ENCODE measurements at regions of chr18 and their contacts with region 1.

Region 1: DNA sequence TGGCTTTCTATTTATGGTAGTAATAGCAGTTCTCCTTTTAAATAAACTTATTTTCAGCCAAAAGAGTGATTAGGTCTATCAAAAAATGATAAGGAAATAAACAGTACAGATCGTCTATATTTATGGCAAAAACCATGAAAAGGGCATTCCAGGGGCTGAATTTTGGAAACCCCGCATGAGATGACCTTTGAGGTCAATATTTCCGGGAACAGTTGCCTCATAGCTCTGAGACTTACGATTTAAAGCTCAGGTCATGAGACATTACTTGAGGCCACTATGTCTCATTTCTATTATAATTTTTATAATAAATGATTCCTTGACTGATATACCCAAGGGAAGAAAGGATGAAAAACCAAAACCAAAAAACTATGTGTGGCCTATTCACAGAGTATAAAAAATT is 101.1 kb downstream of the LDLRAD4 start:
- DNase-seq: no peak
- ATAC-seq: peak; percentile 40
- H3K4me3 ChIP-seq: no peak overlapping the region
- H3K27ac ChIP-seq: peak overlapping the region in 1 of 2 donors; percentile 14
- H3K4me1 ChIP-seq: peaks cover 2 to 3% of the 10 kb centered on the region in 2 donors
- H3K27me3 ChIP-seq: no peaks in the 10 kb centered on the region

Region 2: DNA sequence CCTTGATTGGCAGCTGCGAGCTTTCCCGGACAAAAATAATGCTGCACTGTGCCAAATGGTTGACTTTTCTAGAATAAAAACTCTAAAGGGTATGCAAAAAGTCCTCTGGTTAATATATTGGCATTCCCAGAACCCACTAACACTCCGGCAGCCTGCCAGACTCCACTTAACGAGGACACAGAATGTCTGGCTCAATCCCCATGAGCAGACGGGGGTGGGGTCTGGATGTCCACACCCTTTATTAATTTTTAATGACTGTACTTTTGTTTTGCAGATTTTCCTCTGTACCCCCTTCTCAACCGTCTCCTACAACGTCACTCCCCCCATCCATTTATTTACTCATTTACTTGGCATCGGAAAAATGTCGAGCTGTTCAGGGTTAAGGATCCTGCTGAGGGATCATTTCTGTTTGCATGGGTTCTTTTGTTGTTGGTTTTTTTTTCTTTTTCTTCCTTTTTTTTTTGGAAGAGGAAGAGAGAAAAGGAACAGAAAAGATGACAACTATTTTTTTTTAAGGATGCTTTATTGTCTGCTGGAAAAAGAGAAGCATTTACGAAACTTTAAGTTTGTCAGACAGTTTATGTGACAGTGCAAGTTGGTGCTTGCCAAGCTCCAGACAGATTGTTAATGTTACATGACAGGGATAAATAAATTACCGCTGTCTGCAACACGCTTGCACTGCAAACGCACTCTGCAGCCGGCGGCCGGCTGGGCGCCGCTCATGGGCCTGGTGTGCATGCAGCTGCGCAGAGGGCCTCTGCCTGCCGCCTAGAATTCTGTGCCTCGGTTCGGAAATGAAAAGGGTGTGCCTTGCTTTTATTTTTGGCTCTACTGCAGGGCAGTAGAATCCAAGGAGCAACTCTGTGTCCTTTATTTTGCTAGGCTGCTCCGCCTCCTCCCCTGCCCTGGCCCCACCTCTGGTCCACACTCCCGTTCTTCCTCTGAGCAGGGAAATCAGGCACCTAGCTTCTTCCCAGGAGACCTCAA is 97.5 kb before region 1 on chr18:
- intact Hi-C with region 1: loop called in 1 of 2 experiments (anchors 5 kb)
- DNase-seq: peak; percentile 88 to 89
- ATAC-seq: peak; percentile 79
- H3K4me3 ChIP-seq: no peak overlapping the region
- H3K27ac ChIP-seq: peak overlapping the region; percentile 30 to 32
- H3K4me1 ChIP-seq: no peaks in the 10 kb centered on the region
- H3K27me3 ChIP-seq: no peaks in the 10 kb centered on the region

Region 3: GRCh38 chr18:13279181-13280069 is 40.2 kb before region 1 on chr18:
- intact Hi-C with region 1: loop called (anchors 5 kb)
- DNase-seq: peak in 1 of 2 donors; percentile 42
- ATAC-seq: no peak
- H3K4me3 ChIP-seq: no peak overlapping the region
- H3K27ac ChIP-seq: no peak overlapping the region
- H3K4me1 ChIP-seq: peaks cover under 1 to 3% of the 10 kb centered on the region in 2 donors
- H3K27me3 ChIP-seq: no peaks in the 10 kb centered on the region

Region 4: DNA sequence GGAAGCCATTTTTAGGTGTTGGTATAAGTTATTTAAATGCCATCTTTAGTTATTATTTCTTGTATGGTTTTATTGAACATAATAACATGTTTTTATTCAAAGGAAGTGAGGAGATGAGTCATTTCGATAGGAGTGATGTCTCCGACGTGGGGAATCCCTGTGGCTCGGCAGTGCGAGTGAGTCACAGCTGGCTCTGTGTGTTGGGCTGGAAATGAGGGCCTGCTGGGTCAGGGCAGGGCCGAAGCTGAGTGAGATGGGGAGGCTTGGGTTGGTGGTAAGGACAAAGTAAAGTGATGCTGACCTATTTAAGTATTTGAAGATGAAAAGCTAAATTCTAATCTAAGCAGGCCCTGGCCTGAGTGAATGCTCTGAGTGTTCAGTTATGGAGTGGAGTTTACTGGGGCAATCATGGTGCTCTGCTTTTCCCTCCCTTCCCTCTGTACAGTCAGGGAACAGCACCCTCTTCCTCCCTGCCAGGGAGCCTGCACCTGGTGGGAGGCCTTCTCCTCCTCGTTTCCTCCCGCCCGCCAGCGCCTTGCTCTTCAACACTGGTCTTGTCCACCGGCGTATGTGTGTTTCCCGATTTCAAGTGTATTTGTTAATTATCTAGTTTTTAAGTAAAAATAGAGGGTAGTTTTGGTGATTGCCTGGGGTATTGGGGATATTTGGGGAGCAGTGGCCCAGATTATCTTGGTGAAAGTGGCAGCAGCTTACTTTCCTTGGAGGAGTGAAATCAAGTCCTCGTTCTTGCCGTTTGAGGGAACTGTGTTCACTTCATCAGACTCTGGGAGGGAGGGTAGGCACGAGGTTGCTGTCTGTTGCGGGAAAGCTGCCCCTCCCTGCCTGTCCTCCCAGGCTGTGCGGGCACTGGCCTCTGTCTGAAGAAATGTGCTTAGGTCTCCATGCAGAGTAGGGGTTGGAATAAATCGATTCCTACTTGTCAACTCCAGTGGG is 56.0 kb after region 1 on chr18:
- intact Hi-C with region 1: loop called (anchors 5 kb)
- DNase-seq: peak; percentile 93
- ATAC-seq: peak; percentile 90
- H3K4me3 ChIP-seq: no peak overlapping the region
- H3K27ac ChIP-seq: peak overlapping the region; percentile 70 to 94
- H3K4me1 ChIP-seq: no peaks in the 10 kb centered on the region
- H3K27me3 ChIP-seq: no peaks in the 10 kb centered on the region